Caco-2 (cell line): ENCODE measurements at regions of chr6 and their contacts with region 1.

Region 1: DNA sequence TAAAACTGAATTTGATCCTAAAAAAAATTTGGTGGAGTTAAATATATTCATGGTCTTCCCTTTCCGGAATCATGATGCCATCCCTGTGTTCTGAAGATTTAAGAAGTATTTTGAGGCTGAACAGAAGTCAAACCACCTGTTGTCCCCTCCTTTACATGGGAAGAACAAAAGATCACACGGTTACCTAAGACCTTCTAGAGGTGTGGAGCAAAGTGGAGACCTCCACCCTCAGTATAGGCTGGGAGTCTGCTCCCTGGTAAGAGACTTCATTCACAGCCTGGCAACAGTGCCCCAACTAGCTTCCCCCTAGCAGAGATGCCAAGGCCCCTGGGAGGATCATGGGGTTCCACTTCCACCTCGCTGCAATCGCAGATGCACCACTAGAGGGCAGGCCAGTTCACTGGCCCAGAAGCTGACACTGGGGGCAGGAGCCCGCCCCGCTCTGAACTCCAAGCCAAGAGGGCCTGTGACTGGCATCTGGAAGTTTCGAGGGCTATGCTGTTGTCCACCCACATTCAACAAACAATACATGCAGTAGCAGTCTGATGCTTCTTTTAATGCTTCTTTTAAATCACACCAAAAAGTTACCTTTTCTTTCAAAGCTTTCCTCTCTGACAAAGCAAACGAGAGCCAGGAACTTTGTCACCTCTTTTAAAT is 19.5 kb upstream of the UBE2J1 start:
- DNase-seq: peak; percentile 56 to 81
- H3K4me3 ChIP-seq: no peak overlapping the region
- H3K4me3 Mint-ChIP-seq: no peak overlapping the region
- H3K27ac Mint-ChIP-seq: no peak overlapping the region
- H3K4me1 ChIP-seq: no peaks in the 10 kb centered on the region
- H3K4me1 Mint-ChIP-seq: no peaks in the 10 kb centered on the region
- H3K27me3 ChIP-seq: no peaks in the 10 kb centered on the region
- H3K27me3 Mint-ChIP-seq: no peaks in the 10 kb centered on the region
- CTCF ChIP-seq: peak; percentile 91 to 97

Region 2: GRCh38 chr6:89122625-89123024 is 249.4 kb before region 1 on chr6:
- CTCF ChIA-PET with region 1: no interaction called
- POLR2A ChIA-PET with region 1: no interaction called
- intact Hi-C with region 1: loop called (anchors 2 kb)
- DNase-seq: peak in 1 of 2 experiments; percentile 45
- H3K4me3 ChIP-seq: no peak overlapping the region
- H3K4me3 Mint-ChIP-seq: no peak overlapping the region
- H3K27ac Mint-ChIP-seq: no peak overlapping the region
- H3K4me1 ChIP-seq: no peaks in the 10 kb centered on the region
- H3K4me1 Mint-ChIP-seq: no peaks in the 10 kb centered on the region
- H3K27me3 ChIP-seq: no peaks in the 10 kb centered on the region
- H3K27me3 Mint-ChIP-seq: no peaks in the 10 kb centered on the region
- CTCF ChIP-seq: peak; percentile 61 to 71

Region 3: GRCh38 chr6:89161326-89162046 is 210.5 kb before region 1 on chr6:
- CTCF ChIA-PET with region 1: no interaction called
- POLR2A ChIA-PET with region 1: no interaction called
- intact Hi-C with region 1: no loop called
- DNase-seq: peak in 1 of 2 experiments; percentile 8
- H3K4me3 ChIP-seq: no peak overlapping the region
- H3K4me3 Mint-ChIP-seq: no peak overlapping the region
- H3K27ac Mint-ChIP-seq: no peak overlapping the region
- H3K4me1 ChIP-seq: no peaks in the 10 kb centered on the region
- H3K4me1 Mint-ChIP-seq: no peaks in the 10 kb centered on the region
- H3K27me3 ChIP-seq: no peaks in the 10 kb centered on the region
- H3K27me3 Mint-ChIP-seq: no peaks in the 10 kb centered on the region
- CTCF ChIP-seq: no peak

Region 4: DNA sequence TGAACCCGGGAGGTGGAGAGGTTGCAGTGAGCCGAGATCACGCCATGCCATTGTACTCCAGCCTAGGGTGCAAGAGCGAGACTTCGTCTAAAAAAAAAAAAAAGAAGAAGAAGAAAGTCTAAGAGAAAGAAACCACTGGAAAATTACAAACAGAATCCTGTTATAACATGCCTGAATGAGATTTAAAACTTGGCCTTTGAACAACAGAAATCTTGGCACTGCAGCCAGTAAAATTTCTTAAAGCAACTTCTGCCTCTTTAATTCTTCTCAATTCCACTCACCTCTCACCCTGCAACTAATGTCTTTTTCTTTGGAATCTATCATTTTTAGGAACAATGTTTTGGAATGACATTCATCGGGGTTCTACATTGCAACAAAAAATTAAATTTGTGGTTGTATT is 199.8 kb before region 1 on chr6:
- CTCF ChIA-PET with region 1: no interaction called
- POLR2A ChIA-PET with region 1: no interaction called
- intact Hi-C with region 1: no loop called
- DNase-seq: no peak
- H3K4me3 ChIP-seq: no peak overlapping the region
- H3K4me3 Mint-ChIP-seq: no peak overlapping the region
- H3K27ac Mint-ChIP-seq: no peak overlapping the region
- H3K4me1 ChIP-seq: no peaks in the 10 kb centered on the region
- H3K4me1 Mint-ChIP-seq: no peaks in the 10 kb centered on the region
- H3K27me3 ChIP-seq: no peaks in the 10 kb centered on the region
- H3K27me3 Mint-ChIP-seq: no peaks in the 10 kb centered on the region
- CTCF ChIP-seq: no peak

Region 5: DNA sequence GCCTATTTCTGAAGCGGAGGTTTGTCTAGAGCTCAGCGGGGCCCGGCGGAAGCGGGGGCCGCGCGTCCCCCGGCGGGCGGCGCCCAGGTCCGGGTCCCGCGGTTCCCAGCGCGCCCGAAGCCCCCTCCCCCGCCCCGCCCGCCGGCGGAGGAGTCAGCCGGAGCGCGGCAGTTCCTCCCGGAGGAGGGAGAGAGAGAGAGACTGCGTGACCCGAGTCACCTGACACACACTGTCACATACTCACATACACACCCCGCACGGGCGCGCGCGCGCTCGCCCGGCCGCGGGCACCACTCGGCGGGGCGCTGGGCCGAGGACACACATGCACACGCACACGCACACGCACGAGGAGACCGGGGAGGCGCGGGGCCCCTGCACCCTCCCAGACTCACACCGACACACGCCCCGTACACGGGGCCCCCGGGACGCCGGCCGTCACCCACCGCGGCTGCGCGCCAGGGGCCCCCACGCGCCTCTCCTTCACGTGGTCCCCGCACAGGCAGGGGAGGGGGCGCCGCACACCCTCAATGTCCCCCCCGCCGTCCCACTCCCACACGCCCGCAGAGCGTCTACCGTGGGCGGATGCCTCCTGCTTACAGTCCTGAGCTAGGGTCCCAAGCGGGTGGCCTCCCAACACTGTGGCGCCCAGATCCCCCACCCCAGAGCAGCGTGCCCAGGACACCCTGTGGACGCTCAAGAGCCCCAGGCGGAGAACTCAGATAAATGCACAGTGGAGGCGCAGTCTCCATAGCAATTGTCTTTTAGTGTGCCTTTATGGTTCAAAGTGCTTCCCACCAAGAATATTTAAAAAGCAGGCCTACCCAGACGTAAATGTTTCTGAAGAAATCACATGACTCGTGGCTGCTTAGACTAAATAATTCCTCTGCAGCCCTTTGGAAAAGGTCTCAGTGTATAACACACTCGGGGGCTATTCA is 40.4 kb after region 1 on chr6 and contains the start of gene RRAGD:
- CTCF ChIA-PET with region 1: interaction called, 3 read pairs
- POLR2A ChIA-PET with region 1: no interaction called
- intact Hi-C with region 1: loop called (anchors 5 kb)
- DNase-seq: peak; percentile 54 to 70
- H3K4me3 ChIP-seq: peak within 1 kb of the TSS; percentile 84
- H3K4me3 Mint-ChIP-seq: peak within 1 kb of the TSS; percentile 86
- H3K27ac Mint-ChIP-seq: no peak within 1 kb of the TSS
- H3K4me1 ChIP-seq: no peaks in the 10 kb centered on the region
- H3K4me1 Mint-ChIP-seq: no peaks in the 10 kb centered on the region
- H3K27me3 ChIP-seq: no peaks in the 10 kb centered on the region
- H3K27me3 Mint-ChIP-seq: peaks cover 11% of the 10 kb centered on the region
- CTCF ChIP-seq: no peak
- total RNA-seq, gene RRAGD: 5.9 and 8.0 TPM in 2 replicates

Region 6: GRCh38 chr6:89597988-89598692 is 226.2 kb after region 1 on chr6:
- CTCF ChIA-PET with region 1: no interaction called
- POLR2A ChIA-PET with region 1: no interaction called
- intact Hi-C with region 1: loop called (anchors 2 kb)
- DNase-seq: peak; percentile 63 to 78
- H3K4me3 ChIP-seq: no peak overlapping the region
- H3K4me3 Mint-ChIP-seq: peak overlapping the region; percentile 64
- H3K27ac Mint-ChIP-seq: peak overlapping the region; percentile 45
- H3K4me1 ChIP-seq: peaks cover 4% of the 10 kb centered on the region; the same call in 1 of the 2 replicates
- H3K4me1 Mint-ChIP-seq: peaks cover 6% of the 10 kb centered on the region
- H3K27me3 ChIP-seq: no peaks in the 10 kb centered on the region
- H3K27me3 Mint-ChIP-seq: no peaks in the 10 kb centered on the region
- CTCF ChIP-seq: peak in 1 of 2 experiments; percentile 31